OCI-LY7 (cell line): ENCODE measurements at regions of chr1 and their contacts with region 1.

Region 1: GRCh38 chr1:156212833-156213643 is at the start of gene PMF1:
- DNase-seq: peak; percentile 96
- H3K4me3 ChIP-seq: peak within 1 kb of the TSS; percentile 78
- H3K27ac ChIP-seq: peak within 1 kb of the TSS; percentile 74
- H3K4me1 ChIP-seq: peaks cover 16% of the 10 kb centered on the region
- CTCF ChIP-seq: no peak
- total RNA-seq, gene PMF1: 82.5 and 88.3 TPM in 2 replicates

Region 2: GRCh38 chr1:156090822-156091188 is 122.2 kb before region 1 on chr1:
- CTCF ChIA-PET with region 1: no interaction called
- POLR2A ChIA-PET with region 1: no interaction called
- intact Hi-C with region 1: loop called (anchors 5 kb)
- DNase-seq: peak; percentile 89
- H3K4me3 ChIP-seq: no peak overlapping the region
- H3K27ac ChIP-seq: no peak overlapping the region
- H3K4me1 ChIP-seq: peaks cover 16% of the 10 kb centered on the region
- CTCF ChIP-seq: peak; percentile 97

Region 3: DNA sequence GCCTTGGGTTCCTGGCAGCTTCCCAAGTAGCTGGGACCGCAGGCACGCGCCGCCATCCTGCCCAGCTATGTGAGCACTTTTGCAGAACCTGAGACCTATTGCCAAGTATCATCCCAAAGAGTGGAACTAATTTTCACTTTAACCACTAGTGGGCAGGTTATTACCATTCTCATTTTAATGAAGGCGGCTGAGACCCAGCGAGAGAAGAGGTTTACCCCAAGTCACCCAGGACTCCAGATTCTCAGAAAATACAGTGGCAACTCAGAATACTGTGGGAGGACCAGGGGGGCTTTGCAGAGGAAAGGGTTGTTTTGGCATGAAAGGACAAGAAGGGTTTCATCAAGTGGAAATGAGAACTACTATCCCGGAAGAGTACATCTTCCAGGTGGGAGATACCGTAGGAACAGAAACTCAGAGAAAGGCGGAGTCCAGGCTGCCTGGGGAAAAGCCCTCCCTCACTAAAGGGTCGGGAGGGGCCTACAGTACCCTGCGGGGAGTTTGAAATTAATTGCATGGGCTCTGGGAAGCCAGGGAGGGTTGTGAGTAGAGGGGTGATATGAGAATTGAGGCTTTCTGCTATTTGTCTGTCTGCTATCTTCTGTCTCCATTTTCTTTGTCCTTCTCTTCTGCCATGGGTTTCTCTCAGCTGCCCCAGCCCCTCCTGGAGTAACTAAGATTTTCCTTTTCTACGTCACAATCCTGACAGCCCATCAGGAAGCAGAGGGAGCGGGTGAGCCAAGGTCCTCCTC is 66.8 kb before region 1 on chr1:
- CTCF ChIA-PET with region 1: no interaction called
- POLR2A ChIA-PET with region 1: interaction called, 9 read pairs
- intact Hi-C with region 1: loop called (anchors 1 kb)
- DNase-seq: peak; percentile 89
- H3K4me3 ChIP-seq: peak overlapping the region; percentile 40
- H3K27ac ChIP-seq: peak overlapping the region; percentile 95
- H3K4me1 ChIP-seq: peaks cover 41% of the 10 kb centered on the region
- CTCF ChIP-seq: peak; percentile 93

Region 4: DNA sequence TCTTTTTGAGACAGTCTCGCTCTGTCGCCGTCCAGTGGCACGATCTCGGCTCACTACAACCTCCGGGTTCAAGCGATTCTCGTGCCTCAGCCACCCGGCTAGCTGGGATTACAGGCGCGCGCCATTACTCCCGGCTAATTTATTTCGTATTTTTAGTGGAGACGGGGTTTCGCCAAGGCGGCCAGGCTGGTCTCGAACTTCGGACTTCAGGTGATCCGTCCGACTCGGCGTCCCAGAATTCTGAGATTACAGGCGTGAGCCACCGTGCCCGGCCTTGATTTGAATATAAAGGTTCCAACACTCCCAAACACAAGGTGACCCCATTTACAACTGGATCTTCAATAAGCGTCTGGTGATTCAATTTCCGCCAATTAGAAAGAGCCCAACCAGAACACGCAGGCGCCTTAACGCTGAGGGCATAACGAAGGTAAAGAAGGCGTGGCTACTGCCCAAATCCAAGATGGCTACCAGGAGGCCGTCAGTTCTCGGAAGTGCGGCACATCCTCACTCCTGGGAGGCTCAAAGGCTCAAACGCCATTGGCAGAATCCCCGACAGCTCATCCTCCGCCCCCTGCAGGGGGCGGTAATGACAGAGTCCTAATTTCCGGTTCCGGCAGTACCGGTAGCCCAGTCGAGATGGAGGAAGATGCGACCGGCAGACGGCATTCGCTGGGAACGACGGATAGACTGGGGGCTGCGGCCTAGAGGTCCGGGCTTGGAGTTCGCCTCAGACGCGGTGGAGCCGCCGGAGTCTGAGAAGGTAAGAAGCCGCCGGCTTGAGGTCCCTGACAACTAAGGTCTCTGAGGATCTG is 19.3 kb before region 1 on chr1 and contains the start of gene SLC25A44:
- CTCF ChIA-PET with region 1: interaction called, 4 read pairs
- POLR2A ChIA-PET with region 1: interaction called, 12 read pairs
- intact Hi-C with region 1: no loop called
- DNase-seq: peak; percentile 99
- H3K4me3 ChIP-seq: peak within 1 kb of the TSS; percentile 80
- H3K27ac ChIP-seq: peak within 1 kb of the TSS; percentile 52
- H3K4me1 ChIP-seq: peaks cover 24% of the 10 kb centered on the region
- CTCF ChIP-seq: peak; percentile 56
- total RNA-seq, gene SLC25A44: 8.5 and 11.0 TPM in 2 replicates

Region 5: DNA sequence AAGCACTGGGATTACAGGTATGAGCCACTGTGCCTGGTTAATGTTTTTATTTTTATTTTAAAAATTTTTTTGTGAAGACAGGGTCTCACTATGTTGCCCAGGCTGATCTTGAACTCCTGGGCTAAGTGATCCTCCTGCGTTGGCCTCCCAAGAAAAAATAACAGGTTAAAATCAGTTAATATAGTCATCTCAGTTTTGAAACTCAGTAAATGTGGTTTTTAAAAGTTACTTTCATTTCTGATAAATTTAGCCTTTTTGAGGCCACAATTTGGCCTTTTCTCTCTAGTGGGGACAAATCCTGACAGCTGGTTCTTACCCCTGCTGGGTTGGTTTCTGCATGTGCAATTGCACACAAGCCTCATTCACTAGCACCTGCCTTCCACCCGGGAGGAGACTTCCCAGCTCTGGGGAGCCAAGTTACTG is 13.1 kb after region 1 on chr1:
- CTCF ChIA-PET with region 1: interaction called, 11 read pairs
- POLR2A ChIA-PET with region 1: interaction called, 18 read pairs
- intact Hi-C with region 1: no loop called
- DNase-seq: no peak
- H3K4me3 ChIP-seq: no peak overlapping the region
- H3K27ac ChIP-seq: peak overlapping the region; percentile 39
- H3K4me1 ChIP-seq: peaks cover 15% of the 10 kb centered on the region
- CTCF ChIP-seq: no peak

Region 6: DNA sequence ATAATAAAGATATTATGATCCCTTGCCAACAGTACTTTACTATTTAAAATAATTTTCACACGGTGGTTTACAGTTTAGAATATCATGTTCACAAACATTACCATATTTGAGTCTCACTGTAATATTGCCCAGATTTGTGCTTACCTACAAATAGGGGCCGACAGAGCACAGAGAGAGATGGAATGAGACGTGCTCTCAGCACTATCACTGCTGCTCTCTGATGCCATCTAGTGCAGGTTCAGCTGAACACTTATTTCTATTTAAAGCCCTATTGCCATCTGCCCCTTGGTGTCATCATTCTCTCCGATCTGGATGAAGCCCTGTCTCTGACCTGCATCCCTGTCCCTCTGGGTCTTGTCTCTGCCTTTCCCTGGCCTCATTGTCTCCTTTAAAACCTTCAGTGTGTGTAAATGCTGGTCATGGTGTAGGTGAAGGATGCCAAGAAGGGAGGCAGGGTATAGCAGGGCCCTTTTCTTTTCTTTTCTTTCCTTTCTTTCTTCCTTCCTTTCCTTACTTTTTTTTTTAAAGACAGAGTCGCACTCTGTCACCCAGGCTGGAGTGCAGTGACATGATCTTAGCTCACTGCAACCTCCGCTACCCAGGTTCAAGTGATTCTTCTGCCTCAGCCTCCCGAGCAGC is 395.1 kb after region 1 on chr1:
- CTCF ChIA-PET with region 1: no interaction called
- POLR2A ChIA-PET with region 1: no interaction called
- intact Hi-C with region 1: no loop called
- DNase-seq: peak; percentile 87
- H3K4me3 ChIP-seq: no peak overlapping the region
- H3K27ac ChIP-seq: no peak overlapping the region
- H3K4me1 ChIP-seq: peaks cover 25% of the 10 kb centered on the region
- CTCF ChIP-seq: peak; percentile 91